Activated T-helper 1 cell treated with anti-CD3 and anti-CD28 coated beads, Interleukin-12 subunit alpha, Interleukin-12 subunit beta, Interleukin-2, Interleukin-4 antibody, amounts not matched to agents 30 ng/mL and 10 ng/mL and 1 ng/mL, durations not matched to agents 14 hours and 24 hours and 36 hours (primary cell): ENCODE measurements at regions of chr6 and their contacts with region 1.

Region 1: DNA sequence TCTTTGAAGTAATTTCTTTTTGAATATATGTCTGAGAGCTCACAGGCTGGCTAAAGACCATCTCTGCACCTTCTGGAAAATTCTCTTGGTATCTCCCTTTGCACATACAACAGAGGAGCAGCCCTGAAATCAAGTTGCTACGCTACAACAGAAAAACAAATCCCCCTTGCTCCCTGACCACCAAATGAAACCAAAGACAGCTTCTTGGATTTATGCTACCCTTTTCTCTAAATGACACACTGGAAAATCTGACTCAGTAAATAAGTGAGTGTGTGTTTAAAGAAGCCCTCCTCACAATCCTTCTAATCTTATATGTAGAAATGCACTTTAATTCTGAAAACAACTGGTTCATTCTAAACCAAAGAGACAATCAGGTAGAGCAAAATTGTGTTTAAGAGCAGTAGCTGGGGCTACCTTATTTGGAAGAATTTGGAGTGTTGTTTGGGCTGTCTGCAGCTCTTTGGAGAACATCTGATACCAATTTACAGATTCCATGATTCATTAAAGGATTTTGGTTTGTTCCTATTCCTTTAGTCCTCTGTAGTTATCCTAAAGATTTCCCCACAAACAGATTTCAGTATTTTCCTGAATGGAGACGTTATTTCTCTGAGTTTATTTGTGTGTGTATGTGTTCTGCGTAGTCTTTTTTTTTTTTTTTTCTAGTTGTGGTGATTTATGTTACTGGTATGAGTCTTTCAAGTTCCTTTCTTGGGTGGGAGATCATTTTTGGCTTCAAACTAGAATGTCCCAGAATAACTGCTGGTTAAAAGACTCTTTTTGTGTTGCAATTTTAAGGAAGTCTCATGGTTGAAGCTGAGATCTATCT is 36.4 kb upstream of the UTRN start:
- DNase-seq: no peak
- H3K4me3 Mint-ChIP-seq: no peak overlapping the region
- H3K27ac Mint-ChIP-seq: peak overlapping the region; percentile 57
- H3K4me1 Mint-ChIP-seq: peaks cover 26% of the 10 kb centered on the region
- H3K27me3 Mint-ChIP-seq: peaks cover 7% of the 10 kb centered on the region

Region 2: GRCh38 chr6:143410859-143411270 is 837.8 kb before region 1 on chr6:
- intact Hi-C with region 1: no loop called
- DNase-seq: no peak
- H3K4me3 Mint-ChIP-seq: no peak overlapping the region
- H3K27ac Mint-ChIP-seq: no peak overlapping the region
- H3K4me1 Mint-ChIP-seq: no peaks in the 10 kb centered on the region
- H3K27me3 Mint-ChIP-seq: no peaks in the 10 kb centered on the region

Region 3: DNA sequence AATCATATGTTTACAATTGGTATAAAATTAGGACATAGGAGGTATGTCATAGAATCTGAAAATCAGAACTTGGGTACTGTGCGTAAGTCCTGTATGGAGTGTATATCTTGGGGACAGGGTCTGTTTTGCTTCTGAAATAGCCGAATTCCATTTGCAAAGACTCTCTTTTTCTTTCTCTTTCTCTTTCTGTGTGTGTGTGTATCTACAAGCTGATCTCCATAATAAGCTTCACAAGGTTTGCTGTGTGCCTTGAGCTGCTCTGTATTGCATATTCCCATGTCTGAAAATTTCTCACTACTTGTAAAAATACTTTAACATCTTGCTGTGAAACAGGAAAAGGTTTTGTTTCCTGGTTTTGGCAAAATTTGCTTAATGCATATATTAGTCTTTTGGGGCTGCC is 68.9 kb before region 1 on chr6:
- intact Hi-C with region 1: loop called (anchors 1 kb)
- DNase-seq: no peak
- H3K4me3 Mint-ChIP-seq: no peak overlapping the region
- H3K27ac Mint-ChIP-seq: no peak overlapping the region
- H3K4me1 Mint-ChIP-seq: peaks cover 47% of the 10 kb centered on the region
- H3K27me3 Mint-ChIP-seq: no peaks in the 10 kb centered on the region

Region 4: GRCh38 chr6:144305985-144306384 is 57.3 kb after region 1 on chr6:
- intact Hi-C with region 1: loop called (anchors 2 kb)
- DNase-seq: peak; percentile 41
- H3K4me3 Mint-ChIP-seq: peak overlapping the region; percentile 58
- H3K27ac Mint-ChIP-seq: peak overlapping the region; percentile 85
- H3K4me1 Mint-ChIP-seq: peaks cover 51% of the 10 kb centered on the region
- H3K27me3 Mint-ChIP-seq: peaks cover 6% of the 10 kb centered on the region

Region 5: GRCh38 chr6:144597511-144597910 is 348.8 kb after region 1 on chr6:
- intact Hi-C with region 1: loop called (anchors 1 kb)
- DNase-seq: no peak
- H3K4me3 Mint-ChIP-seq: no peak overlapping the region
- H3K27ac Mint-ChIP-seq: peak overlapping the region; percentile 0
- H3K4me1 Mint-ChIP-seq: peaks cover 56% of the 10 kb centered on the region
- H3K27me3 Mint-ChIP-seq: no peaks in the 10 kb centered on the region